ENCODE measurements at regions of chr13 and their contacts with region 1.

Region 1: DNA sequence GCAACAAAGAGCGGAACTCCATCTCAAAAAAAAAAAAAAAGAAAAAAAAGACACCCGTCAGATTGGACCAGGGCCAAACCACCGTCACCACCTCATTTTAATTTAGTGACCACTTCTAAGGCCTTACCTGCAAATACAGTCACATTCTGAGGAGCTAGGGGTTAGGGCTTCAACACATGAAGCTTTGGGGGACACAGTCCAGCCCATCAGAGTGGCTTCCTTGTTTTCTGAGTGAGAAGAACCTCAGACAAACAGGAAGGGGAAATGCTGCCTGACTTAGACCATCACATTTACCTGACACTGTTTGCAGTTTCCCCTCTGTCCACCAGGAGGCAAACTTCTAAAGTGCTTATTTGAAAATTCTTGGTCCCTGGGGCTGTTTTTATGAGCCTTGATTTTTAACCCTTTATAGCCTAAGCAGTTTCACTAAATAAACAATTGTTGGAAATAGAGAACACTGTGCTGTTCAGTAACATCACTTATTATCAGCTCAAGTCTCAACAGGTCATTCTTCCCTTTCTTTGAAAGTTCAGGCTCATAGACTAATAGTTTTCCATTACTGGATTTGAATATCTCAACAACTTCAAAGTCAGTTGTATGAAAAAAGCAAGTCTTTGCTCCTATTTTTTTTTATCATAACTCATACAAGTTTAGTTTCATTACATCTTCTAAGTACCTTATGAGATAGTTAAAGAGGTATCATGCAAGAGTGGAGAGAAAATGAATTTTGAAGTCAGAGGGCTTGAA is 74.9 kb upstream of the WASF3 start:
- H3K4me3 ChIP-seq: no peak overlapping the region; the same call in 1 of the 2 replicates
- H3K27ac ChIP-seq: no peak overlapping the region
- H3K4me1 ChIP-seq: no peaks in the 10 kb centered on the region
- CTCF ChIP-seq: 0 out of 2 replicates have a peak, but pooled peaks have one; percentile 19

Region 2: GRCh38 chr13:26498656-26499591 is 16.3 kb after region 1 on chr13:
- CTCF ChIA-PET with region 1: interaction called, 10 read pairs
- POLR2A ChIA-PET with region 1: no interaction called
- H3K4me3 ChIP-seq: no peak overlapping the region
- H3K27ac ChIP-seq: no peak overlapping the region
- H3K4me1 ChIP-seq: no peaks in the 10 kb centered on the region
- CTCF ChIP-seq: no peak

Region 3: DNA sequence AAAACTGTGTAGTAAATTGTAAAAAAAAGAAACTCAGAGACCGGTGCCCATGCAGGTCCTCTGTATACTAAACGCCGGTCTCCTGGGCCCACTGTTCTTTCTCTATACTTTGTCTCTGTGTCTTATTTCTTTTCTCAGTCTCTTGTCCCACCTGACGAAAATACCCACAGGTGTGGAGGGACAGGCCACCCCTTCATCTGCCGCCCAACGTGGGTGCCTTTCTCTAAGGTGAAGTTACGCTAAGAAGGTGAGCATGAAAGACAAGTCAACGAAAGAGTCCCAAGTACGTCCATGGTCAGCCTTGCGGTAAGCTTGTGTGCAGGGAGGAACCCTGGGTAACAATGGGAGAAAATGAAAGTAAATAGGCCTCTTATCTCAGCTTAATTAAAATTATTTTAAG is 26.9 kb after region 1 on chr13:
- CTCF ChIA-PET with region 1: no interaction called
- POLR2A ChIA-PET with region 1: no interaction called
- H3K4me3 ChIP-seq: no peak overlapping the region
- H3K27ac ChIP-seq: no peak overlapping the region
- H3K4me1 ChIP-seq: no peaks in the 10 kb centered on the region
- CTCF ChIP-seq: no peak

Region 4: DNA sequence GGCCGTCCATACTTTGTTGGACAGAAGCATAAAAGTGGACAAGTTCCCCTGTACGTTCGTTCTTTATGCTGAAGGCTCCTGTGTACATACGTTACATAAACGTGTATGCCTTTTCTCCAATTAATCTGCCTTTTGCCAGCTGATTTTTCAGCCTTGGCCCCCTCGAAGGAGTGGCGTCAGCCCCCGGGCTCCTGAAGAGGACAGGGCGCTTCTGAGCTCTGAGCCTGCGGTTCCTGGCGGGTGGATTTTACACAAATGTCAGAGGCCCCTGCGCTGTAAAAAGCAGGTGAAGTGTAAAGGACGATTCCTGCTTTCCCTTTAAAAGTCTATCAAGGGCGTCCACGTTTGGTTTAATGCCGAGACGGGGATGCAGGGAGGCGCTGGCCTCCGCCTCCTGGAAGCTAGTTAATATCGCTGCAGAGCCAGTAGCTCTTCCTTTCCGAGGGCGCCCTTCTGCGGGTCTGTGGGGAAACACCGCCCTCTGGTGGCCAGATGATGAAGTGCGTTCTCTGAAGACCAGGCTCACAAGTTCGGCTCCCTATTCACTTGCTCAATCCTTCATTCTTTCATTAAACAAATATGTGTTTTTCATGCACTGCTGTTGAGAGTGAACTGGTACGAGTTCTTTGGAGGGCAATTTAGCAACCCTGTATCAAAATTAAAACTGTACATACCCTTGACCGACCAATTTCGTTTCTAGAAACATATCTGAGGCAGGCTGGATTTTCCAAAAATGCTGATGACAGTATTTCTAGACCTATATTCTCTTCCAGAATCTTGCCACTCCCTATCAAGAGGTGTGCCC is 216.0 kb after region 1 on chr13:
- CTCF ChIA-PET with region 1: interaction called, 28 read pairs
- POLR2A ChIA-PET with region 1: no interaction called
- H3K4me3 ChIP-seq: no peak overlapping the region
- H3K27ac ChIP-seq: no peak overlapping the region
- H3K4me1 ChIP-seq: no peaks in the 10 kb centered on the region
- CTCF ChIP-seq: peak; percentile 85

Measured in HEK293 (cell line).